ENCODE measurements at regions of chr11 and their contacts with region 1.

Region 1: GRCh38 chr11:69066122-69067112 is 17.7 kb downstream of the TPCN2 start:
- DNase-seq: no peak
- ATAC-seq: no peak
- H3K4me3 ChIP-seq: no peak overlapping the region
- H3K27ac ChIP-seq: no peak overlapping the region
- H3K4me1 ChIP-seq: no peaks in the 10 kb centered on the region
- H3K27me3 ChIP-seq: no peaks in the 10 kb centered on the region
- CTCF ChIP-seq: no peak

Region 2: GRCh38 chr11:69101115-69101791 is 34.8 kb after region 1 on chr11:
- CTCF ChIA-PET with region 1: no interaction called
- POLR2A ChIA-PET with region 1: no interaction called
- intact Hi-C with region 1: no loop called
- DNase-seq: peak; percentile 95
- ATAC-seq: peak; percentile 84
- H3K4me3 ChIP-seq: no peak overlapping the region
- H3K27ac ChIP-seq: no peak overlapping the region
- H3K4me1 ChIP-seq: peaks cover 17% of the 10 kb centered on the region
- H3K27me3 ChIP-seq: no peaks in the 10 kb centered on the region
- CTCF ChIP-seq: peak; percentile 98

Region 3: GRCh38 chr11:69151836-69152235 is 85.4 kb after region 1 on chr11:
- CTCF ChIA-PET with region 1: no interaction called
- POLR2A ChIA-PET with region 1: interaction called, 12 read pairs
- intact Hi-C with region 1: no loop called
- DNase-seq: no peak
- ATAC-seq: no peak
- H3K4me3 ChIP-seq: no peak overlapping the region
- H3K27ac ChIP-seq: no peak overlapping the region
- H3K4me1 ChIP-seq: no peaks in the 10 kb centered on the region
- H3K27me3 ChIP-seq: no peaks in the 10 kb centered on the region
- CTCF ChIP-seq: no peak